Activated CD8-positive, alpha-beta T cell treated with anti-CD3 and anti-CD28 coated beads for 36 hours (primary cell): ENCODE measurements at regions of chr3 and their contacts with region 1.

Region 1: GRCh38 chr3:58463181-58463941 is 28.5 kb upstream of the KCTD6 start:
- DNase-seq: peak; percentile 90
- ATAC-seq: peak; percentile 97
- H3K4me3 Mint-ChIP-seq: peak overlapping the region; percentile 31
- H3K27ac Mint-ChIP-seq: no peak overlapping the region
- H3K4me1 Mint-ChIP-seq: peaks cover 14% of the 10 kb centered on the region
- H3K27me3 Mint-ChIP-seq: no peaks in the 10 kb centered on the region
- CTCF ChIP-seq: peak; percentile 95

Region 2: DNA sequence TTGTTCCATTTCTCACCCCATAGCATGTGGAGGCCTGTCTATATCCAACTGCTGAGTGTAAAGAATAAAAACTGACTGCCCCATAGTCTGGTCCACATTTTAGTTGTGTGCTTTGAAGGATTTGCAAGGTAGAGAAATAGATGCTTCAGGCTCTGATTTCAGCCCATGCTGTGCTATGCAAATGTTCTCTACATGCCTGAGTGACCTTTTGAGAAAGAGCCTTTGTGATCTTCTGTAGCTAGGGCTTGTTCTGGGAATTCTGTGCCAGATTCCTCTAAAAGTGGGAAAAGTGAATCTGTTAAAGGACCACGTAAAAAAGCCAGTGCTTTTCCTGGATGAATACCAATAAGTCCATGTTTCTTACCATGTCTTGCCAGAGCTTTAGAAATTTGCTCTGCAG is 33.7 kb after region 1 on chr3:
- CTCF ChIA-PET with region 1: interaction called, 30 read pairs
- POLR2A ChIA-PET with region 1: no interaction called
- intact Hi-C with region 1: loop called (anchors 5 kb)
- DNase-seq: no peak
- ATAC-seq: no peak
- H3K4me3 Mint-ChIP-seq: no peak overlapping the region
- H3K27ac Mint-ChIP-seq: no peak overlapping the region
- H3K4me1 Mint-ChIP-seq: peaks cover 41% of the 10 kb centered on the region
- H3K27me3 Mint-ChIP-seq: no peaks in the 10 kb centered on the region
- CTCF ChIP-seq: no peak

Region 3: GRCh38 chr3:58659051-58659675 is 195.8 kb after region 1 on chr3:
- CTCF ChIA-PET with region 1: no interaction called
- POLR2A ChIA-PET with region 1: no interaction called
- intact Hi-C with region 1: no loop called
- DNase-seq: no peak
- ATAC-seq: no peak
- H3K4me3 Mint-ChIP-seq: no peak overlapping the region
- H3K27ac Mint-ChIP-seq: no peak overlapping the region
- H3K4me1 Mint-ChIP-seq: no peaks in the 10 kb centered on the region
- H3K27me3 Mint-ChIP-seq: no peaks in the 10 kb centered on the region
- CTCF ChIP-seq: no peak